ENCODE measurements at regions of chr5 and their contacts with region 1.

Region 1: GRCh38 chr5:55534436-55535198 is at the start of gene PLPP1:
- DNase-seq: peak; percentile 88 to 90
- ATAC-seq: peak; percentile 84 to 85
- H3K4me3 ChIP-seq: peak within 1 kb of the TSS; percentile 69 to 88 (median 80)
- H3K27ac ChIP-seq: peak within 1 kb of the TSS; percentile 93 to 100 (median 96)
- H3K4me1 ChIP-seq: peaks cover 20 to 29% of the 10 kb centered on the region in 2 donors
- H3K27me3 ChIP-seq: no peaks in the 10 kb centered on the region
- CTCF ChIP-seq: no peak
- POLR2A ChIP-seq: peak; percentile 75 to 93
- total RNA-seq, gene PLPP1: 79.8 to 147 (median 91.5) TPM

Region 2: DNA sequence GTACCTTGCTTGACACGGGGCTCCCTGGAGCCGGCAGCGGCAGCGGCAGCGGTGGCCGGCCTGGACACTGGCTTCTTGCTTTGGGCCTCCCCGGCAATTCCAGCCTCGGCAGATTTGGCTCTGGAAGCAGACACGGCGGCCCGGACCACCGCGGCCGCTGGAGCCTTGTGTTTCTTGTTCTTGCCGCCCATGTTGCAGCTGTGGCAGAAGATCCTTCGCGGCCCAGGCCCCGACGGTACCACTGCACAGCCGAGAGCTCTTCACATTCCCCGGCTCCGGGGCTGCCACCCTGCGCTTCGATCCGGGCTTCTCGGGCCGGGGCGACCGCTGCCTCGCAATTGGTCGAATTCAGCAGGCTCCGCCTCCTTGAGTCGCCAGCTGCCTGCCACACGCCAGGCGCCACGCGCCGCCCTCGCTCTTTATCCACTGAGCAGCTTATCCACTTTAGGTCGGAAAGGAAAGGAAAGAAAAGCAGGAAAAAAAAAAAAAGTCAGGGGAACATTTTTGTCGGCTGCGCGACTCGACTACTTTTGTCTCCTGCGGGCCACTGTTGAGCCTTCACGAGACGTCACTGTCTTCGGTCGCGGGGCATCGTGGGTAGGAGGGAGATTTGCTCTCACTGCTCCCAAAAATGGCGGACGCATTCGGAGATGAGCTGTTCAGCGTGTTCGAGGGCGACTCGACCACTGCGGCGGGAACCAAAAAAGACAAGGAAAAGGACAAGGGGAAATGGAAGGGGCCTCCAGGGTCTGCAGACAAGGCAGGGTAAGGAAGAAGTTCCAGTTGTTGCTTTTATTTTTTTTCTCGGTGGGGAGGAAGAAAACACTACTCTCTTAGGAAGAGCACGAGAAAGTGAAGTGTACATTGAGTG is 227.0 kb before region 1 on chr5 and contains the starts of genes DHX29 and MTREX:
- in situ Hi-C with region 1: no loop called
- intact Hi-C with region 1: loop called (anchors 10 kb)
- DNase-seq: peak; percentile 84 to 86
- ATAC-seq: peak; percentile 96
- H3K4me3 ChIP-seq: peak within 1 kb of the TSS; percentile 64 to 97 (median 86)
- H3K27ac ChIP-seq: peak within 1 kb of the TSS; percentile 86 to 96 (median 95)
- H3K4me1 ChIP-seq: peaks cover 47 to 68% of the 10 kb centered on the region in 2 donors
- H3K27me3 ChIP-seq: no peaks in the 10 kb centered on the region
- CTCF ChIP-seq: no peak
- POLR2A ChIP-seq: peak; percentile 63 to 64
- total RNA-seq, gene DHX29: 33.1 to 44.6 (median 41.0) TPM
- total RNA-seq, gene MTREX: 92.4 to 124 (median 109) TPM

Region 3: DNA sequence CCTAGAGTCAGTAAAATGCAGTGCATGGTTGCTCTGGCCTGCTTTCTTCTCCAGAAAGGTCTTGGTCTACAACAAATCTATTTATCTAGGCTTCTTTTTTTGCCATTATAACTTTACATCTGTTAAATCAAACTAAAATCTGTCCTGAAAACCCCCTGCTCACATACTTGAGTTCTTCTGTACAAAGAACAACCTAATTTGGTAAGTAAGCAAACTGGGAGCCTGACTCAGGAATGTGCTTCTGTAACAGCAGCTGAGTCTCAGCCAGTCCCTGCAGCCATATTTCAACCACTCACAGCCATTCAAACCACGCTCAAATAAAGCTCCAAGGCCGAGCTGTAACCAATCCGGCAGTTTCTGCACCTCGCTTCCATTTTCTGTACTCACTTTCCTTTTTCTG is 95.6 kb before region 1 on chr5:
- in situ Hi-C with region 1: no loop called
- intact Hi-C with region 1: loop called (anchors 1 kb)
- DNase-seq: peak; percentile 42 to 68
- ATAC-seq: peak; percentile 50 to 73
- H3K4me3 ChIP-seq: peak overlapping the region in 1 of 4 donors; percentile 9
- H3K27ac ChIP-seq: peak overlapping the region; percentile 89 to 93 (median 90)
- H3K4me1 ChIP-seq: peaks cover 67 to 73% of the 10 kb centered on the region in 2 donors
- H3K27me3 ChIP-seq: no peaks in the 10 kb centered on the region
- CTCF ChIP-seq: no peak
- POLR2A ChIP-seq: no peak

Region 4: GRCh38 chr5:55601204-55601618 is 66.6 kb after region 1 on chr5:
- in situ Hi-C with region 1: loop called in 1 of 4 experiments (anchors 5 kb)
- intact Hi-C with region 1: loop called (anchors 2 kb)
- DNase-seq: peak; percentile 75 to 82
- ATAC-seq: peak; percentile 84 to 87
- H3K4me3 ChIP-seq: peak overlapping the region in 3 of 4 donors; percentile 23 to 34 (median 32)
- H3K27ac ChIP-seq: peak overlapping the region; percentile 83 to 89 (median 84)
- H3K4me1 ChIP-seq: peaks cover 42 to 69% of the 10 kb centered on the region in 2 donors
- H3K27me3 ChIP-seq: no peaks in the 10 kb centered on the region
- CTCF ChIP-seq: no peak
- POLR2A ChIP-seq: peak; percentile 14 to 23

Region 5: DNA sequence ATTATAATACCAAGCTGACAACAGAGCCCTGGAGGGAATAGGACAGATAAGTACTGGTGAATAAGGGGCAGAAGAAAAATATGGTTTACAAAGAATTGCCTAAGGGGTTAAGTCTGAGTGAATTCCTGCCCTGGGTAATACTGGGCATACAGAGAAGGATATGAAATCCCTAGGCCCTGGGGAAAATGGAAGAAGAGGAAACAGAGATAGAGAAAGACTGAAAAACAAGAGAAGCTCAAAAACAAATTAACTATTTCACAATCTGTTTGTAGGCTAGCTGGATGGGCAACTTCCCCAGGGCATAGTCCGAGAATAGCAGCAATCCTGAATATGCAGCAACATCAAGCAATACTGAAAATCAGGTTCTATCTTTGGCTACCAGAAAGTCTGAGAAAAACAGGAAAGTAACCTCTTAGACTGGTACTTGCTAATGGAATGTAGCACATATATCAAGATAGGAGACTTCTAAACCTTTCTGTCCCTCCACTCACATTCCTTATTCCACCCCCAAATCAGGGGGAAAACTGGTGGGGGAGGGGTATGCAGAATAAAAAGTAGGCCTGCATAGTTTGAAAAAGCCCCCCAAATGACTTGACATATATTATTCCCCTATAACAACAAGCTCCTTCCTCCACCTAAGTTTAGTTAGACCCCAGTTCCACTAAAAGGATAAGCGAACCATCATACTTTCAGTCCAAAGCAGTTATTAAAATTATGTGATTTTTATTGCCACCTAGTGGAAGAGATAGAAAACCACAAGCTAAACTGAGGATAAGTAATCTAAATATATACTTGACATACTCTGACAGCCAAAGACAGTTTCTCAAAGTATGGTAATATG is 156.9 kb after region 1 on chr5:
- in situ Hi-C with region 1: no loop called
- intact Hi-C with region 1: loop called (anchors 5 kb)
- DNase-seq: peak in 1 of 2 donors; percentile 7
- ATAC-seq: peak; percentile 86 to 87
- H3K4me3 ChIP-seq: peak overlapping the region in 3 of 4 donors; percentile 11 to 39 (median 12)
- H3K27ac ChIP-seq: peak overlapping the region; percentile 2 to 37 (median 17)
- H3K4me1 ChIP-seq: peaks cover 17 to 20% of the 10 kb centered on the region in 2 donors
- H3K27me3 ChIP-seq: no peaks in the 10 kb centered on the region
- CTCF ChIP-seq: peak; percentile 63 to 89 (median 69)
- POLR2A ChIP-seq: no peak

Region 6: GRCh38 chr5:56039985-56040384 is 505.4 kb after region 1 on chr5:
- in situ Hi-C with region 1: no loop called
- intact Hi-C with region 1: no loop called
- DNase-seq: no peak
- ATAC-seq: no peak
- H3K4me3 ChIP-seq: no peak overlapping the region
- H3K27ac ChIP-seq: no peak overlapping the region
- H3K4me1 ChIP-seq: no peaks in the 10 kb centered on the region
- H3K27me3 ChIP-seq: no peaks in the 10 kb centered on the region
- CTCF ChIP-seq: no peak
- POLR2A ChIP-seq: no peak